Left cardiac atrium (tissue), 4 donors: ENCODE measurements at regions of chr4 and their contacts with region 1.

Region 1: GRCh38 chr4:75673027-75673958 is at the start of gene G3BP2:
- DNase-seq: peak; percentile 99
- ATAC-seq: peak; percentile 99 to 100
- total RNA-seq, gene G3BP2: 68.5 to 110 TPM

Region 2: GRCh38 chr4:75724066-75724866 is 51.0 kb after region 1 on chr4 and contains the start of gene USO1:
- intact Hi-C with region 1: loop called (anchors 1 to 10 kb)
- DNase-seq: peak; percentile 98
- ATAC-seq: peak; percentile 98
- total RNA-seq, gene USO1: 77.9 to 84.5 TPM

Region 3: DNA sequence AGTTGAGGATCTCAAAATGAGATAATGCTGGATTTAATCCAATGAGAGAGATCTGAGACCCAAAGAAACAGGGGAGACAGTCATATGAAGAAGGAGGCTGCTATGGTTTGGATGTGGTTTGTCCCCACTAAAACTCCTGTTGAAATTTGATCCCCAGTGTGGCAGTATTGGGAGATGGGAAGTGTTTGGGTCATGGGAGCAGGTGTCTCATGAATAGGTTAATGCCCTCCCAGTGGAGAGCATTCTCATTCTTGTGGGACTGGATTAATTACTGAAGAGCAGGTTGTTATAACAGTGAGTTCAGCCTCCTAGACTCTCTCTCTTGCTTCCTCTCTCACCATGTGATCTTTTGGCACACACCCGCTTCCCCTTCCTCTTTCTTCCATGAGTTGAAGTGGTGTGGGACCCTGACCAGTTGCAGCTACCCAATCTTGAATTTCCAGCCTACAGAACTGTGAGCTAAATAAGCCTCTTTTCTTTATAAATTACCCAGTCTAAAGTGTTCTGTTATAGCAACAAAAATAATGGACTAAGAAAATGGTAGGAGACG is 158.6 kb after region 1 on chr4:
- intact Hi-C with region 1: no loop called
- DNase-seq: no peak
- ATAC-seq: peak in 1 of 2 donors; percentile 47

Region 4: GRCh38 chr4:76626686-76627465 is 953.6 kb after region 1 on chr4:
- intact Hi-C with region 1: no loop called
- DNase-seq: no peak
- ATAC-seq: no peak